ENCODE measurements at regions of chrX and their contacts with region 1.

Region 1: GRCh38 chrX:69615779-69616456 is at the start of gene EDA:
- DNase-seq: peak; percentile 63 to 74 (median 67)
- H3K4me3 ChIP-seq: peak within 1 kb of the TSS in 1 of 2 donors; percentile 35
- H3K4me3 Mint-ChIP-seq: peak within 1 kb of the TSS; percentile 84 to 91 (median 86)
- H3K27ac ChIP-seq: peak within 1 kb of the TSS; percentile 4
- H3K27ac Mint-ChIP-seq: peak within 1 kb of the TSS in 1 of 7 donors; percentile 66
- H3K4me1 ChIP-seq: peaks cover 4% of the 10 kb centered on the region
- H3K4me1 Mint-ChIP-seq: peaks cover 7 to 16% (median 12%) of the 10 kb centered on the region in 4 donors
- H3K27me3 ChIP-seq: no peaks in the 10 kb centered on the region
- H3K27me3 Mint-ChIP-seq: peaks cover 0 to 5% of the 10 kb centered on the region in 2 donors
- total RNA-seq, gene EDA: 2.8 to 4.0 TPM

Region 2: DNA sequence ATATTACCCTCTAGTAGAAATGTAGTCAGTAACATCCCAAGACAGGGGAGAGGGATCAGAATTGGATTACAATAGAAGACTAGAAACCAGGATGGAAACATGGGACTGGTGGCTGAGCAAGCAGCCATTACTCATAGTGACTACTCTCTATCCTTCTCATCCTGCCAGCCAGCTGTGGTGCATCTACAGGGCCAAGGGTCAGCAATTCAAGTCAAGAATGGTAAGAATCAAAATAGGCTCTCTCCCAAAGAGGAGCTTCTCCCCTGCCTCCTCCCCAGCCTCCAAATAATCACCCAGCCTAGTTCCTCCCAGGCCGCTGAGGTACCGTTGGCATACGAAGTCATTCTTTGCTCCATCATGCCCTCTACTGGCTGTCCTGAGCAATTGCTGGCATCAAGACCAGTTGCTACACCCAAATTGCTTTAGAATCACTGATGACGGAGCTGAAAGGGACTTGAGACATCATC is 414.4 kb after region 1 on chrX:
- CTCF ChIA-PET with region 1: no interaction called
- POLR2A ChIA-PET with region 1: no interaction called
- intact Hi-C with region 1: loop called (anchors 5 kb)
- DNase-seq: peak; percentile 31 to 54 (median 51)
- H3K4me3 ChIP-seq: no peak overlapping the region
- H3K4me3 Mint-ChIP-seq: peak overlapping the region in 2 of 8 donors; percentile 9 to 11
- H3K27ac ChIP-seq: no peak overlapping the region
- H3K27ac Mint-ChIP-seq: peak overlapping the region in 3 of 7 donors; percentile 6 to 25 (median 12)
- H3K4me1 ChIP-seq: peaks cover 27% of the 10 kb centered on the region
- H3K4me1 Mint-ChIP-seq: peaks cover 10 to 42% (median 23%) of the 10 kb centered on the region in 4 donors
- H3K27me3 ChIP-seq: no peaks in the 10 kb centered on the region
- H3K27me3 Mint-ChIP-seq: no peaks in the 10 kb centered on the region